Right ventricle myocardium inferior (tissue), 1 donor: ENCODE measurements at regions of chr2 and their contacts with region 1.

Region 1: GRCh38 chr2:9261231-9261883 is 54.7 kb downstream of the ASAP2 start:
- DNase-seq: no peak
- ATAC-seq: peak; percentile 48

Region 2: DNA sequence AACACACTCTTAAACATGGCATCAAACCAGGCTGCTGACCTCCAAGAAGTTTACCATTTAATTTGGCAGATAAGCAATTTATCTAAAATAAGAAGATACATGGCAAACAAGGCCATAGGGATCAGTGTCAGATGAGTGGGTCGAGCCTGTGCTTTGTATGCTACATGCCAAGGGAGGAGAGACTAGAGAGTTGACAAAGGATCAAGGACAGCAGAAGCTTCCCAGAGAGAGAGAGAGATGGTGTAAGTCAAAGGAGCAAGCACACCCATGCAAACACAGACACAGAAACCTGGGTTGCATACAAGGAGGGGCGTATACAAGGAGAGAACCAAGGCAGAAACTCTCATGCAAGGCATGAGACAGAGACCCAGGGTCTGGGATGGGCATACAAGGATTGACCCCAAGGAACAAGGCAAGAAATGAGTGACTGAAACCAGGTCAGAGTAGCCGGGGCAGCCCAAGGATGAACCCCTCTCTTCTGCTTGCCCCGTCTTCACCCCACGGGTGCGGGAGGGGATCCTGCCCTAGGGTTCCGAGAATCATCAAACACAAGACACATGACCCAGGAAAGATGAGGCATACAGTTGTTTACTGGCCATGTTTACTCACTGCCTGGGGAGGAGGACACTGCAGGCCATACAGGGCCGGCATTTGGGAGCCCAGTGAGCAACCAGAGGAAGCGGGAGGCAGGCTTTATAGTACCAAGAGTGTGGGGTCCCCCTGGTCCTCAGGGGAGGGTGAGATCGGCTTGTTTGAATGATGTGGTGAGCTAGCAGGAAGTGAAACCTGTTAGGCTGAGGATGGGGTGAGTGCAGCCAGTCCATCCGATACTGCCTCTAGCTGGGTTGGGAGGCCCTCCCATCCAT is 1108.7 kb before region 1 on chr2:
- intact Hi-C with region 1: no loop called
- DNase-seq: no peak
- ATAC-seq: no peak

Region 3: DNA sequence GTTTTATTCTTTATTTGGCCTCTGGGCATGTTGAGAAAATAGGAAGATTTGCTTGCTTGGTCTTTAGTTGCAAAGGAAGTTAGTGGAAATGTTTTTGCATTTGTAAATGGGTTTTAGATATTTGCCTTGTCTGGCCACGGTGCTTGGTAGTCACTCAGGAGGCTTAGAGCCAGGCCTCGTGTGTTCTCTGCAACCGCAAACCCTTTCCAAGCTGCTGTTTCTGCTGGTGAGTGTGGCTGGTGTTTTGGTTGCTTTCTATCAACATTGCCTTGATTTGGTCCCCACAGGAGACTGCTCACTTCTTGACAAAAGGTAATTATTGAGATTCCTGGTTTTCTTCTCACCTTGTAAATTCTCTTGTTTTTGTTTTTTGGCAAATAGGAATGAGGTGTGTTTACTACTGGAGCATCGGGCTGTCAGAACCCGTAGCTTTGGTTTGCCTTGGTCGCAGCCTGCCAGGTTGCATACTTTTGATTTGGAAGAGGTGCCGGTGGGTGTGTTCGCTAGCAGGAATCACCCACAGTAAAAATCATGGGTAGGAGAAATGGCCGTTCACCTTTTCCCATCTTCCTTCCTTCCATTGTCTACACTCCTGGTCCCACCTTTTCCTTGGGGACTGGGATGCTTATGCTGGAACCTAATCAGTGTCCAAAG is 39.0 kb before region 1 on chr2:
- intact Hi-C with region 1: no loop called
- DNase-seq: no peak
- ATAC-seq: peak; percentile 56

Region 4: DNA sequence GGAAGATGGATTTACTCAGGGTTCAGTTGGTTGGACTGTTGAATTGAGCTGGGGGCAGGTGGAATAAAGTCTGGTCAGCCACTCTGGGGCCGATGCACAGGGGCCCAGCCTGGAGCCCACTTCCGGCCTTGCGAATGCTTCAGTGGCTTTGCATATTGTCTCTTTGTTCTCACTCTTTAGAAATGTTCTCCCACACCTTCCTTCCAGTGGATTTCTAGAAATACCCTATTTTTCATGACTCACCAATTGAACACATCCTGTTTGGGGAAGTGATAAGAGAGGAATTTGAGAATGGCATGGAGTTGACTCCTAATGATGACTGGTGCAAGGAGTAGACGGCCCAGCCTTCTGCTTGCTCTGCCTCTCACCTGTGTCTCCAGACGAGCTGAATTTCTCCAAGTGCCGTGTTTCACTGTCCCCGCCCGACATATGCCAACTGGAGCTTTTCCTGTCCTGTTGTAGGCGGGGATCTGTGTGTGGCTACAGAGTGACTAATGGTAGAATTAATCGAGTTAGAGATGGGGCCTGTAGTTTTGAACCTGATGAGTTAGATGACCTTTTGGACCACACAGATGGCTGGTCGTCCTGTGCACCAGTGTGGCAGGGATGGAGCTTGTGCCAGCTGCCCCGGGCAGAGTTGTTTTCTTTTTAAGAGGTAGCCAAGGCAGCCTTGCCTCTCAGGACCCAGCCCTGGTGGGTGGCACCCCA is 26.5 kb before region 1 on chr2:
- intact Hi-C with region 1: loop called (anchors 2 kb)
- DNase-seq: no peak
- ATAC-seq: no peak

Region 5: GRCh38 chr2:9318461-9319337 is 57.3 kb after region 1 on chr2:
- intact Hi-C with region 1: loop called (anchors 5 kb)
- DNase-seq: no peak
- ATAC-seq: peak; percentile 75